Gastrocnemius medialis (tissue), 4 donors: ENCODE measurements at regions of chr2 and their contacts with region 1.

Region 1: GRCh38 chr2:45993476-45993991 is 303.7 kb upstream of the EPAS1 start:
- DNase-seq: peak in 1 of 2 donors; percentile 42
- ATAC-seq: peak; percentile 65 to 66
- H3K4me3 ChIP-seq: no peak overlapping the region
- H3K27ac ChIP-seq: no peak overlapping the region
- H3K4me1 ChIP-seq: peaks cover 8 to 24% of the 10 kb centered on the region in 2 donors
- H3K27me3 ChIP-seq: no peaks in the 10 kb centered on the region
- CTCF ChIP-seq: peak; percentile 61 to 80 (median 66)
- POLR2A ChIP-seq: no peak

Region 2: GRCh38 chr2:45951025-45951727 is 42.4 kb before region 1 on chr2:
- in situ Hi-C with region 1: no loop called
- intact Hi-C with region 1: no loop called
- DNase-seq: no peak
- ATAC-seq: no peak
- H3K4me3 ChIP-seq: no peak overlapping the region
- H3K27ac ChIP-seq: no peak overlapping the region
- H3K4me1 ChIP-seq: peaks cover 0 to 8% of the 10 kb centered on the region in 2 donors
- H3K27me3 ChIP-seq: no peaks in the 10 kb centered on the region
- CTCF ChIP-seq: no peak
- POLR2A ChIP-seq: no peak

Region 3: DNA sequence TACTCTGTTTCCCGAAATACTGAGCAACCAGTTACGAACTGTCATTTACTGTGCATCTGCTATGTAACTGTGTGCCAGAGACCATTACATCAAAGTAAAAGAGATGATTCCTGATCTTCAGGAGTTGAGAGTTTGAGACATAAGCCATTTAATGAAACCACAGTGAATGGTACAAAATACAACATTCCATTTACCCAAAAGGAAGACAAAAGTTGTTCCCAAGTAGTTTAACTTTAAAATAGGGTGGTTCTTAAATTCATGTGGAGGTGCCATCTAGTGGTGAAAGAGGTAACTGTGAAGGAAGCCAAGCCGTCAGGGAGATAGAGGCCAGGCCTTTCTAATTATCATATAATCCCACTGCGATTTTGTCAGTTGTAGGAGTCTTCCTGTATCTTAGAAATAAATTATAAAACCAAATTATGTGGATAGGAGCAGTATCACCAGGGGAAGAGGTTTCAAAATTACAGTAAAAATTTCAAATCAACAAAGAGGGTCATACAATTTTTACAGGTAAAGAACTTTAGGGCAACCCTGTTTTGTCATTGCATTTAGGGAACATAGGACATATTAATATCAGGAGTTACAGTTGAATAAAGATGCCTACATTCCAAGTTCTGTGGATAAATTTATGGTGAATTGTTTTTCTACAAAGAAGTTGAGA is 371.4 kb after region 1 on chr2:
- in situ Hi-C with region 1: loop called in 2 of 4 experiments (anchors 10 kb)
- intact Hi-C with region 1: no loop called
- DNase-seq: no peak
- ATAC-seq: peak; percentile 44 to 71
- H3K4me3 ChIP-seq: no peak overlapping the region
- H3K27ac ChIP-seq: peak overlapping the region in 2 of 4 donors; percentile 12 to 19
- H3K4me1 ChIP-seq: peaks cover 7 to 10% of the 10 kb centered on the region in 2 donors
- H3K27me3 ChIP-seq: no peaks in the 10 kb centered on the region
- CTCF ChIP-seq: peak; percentile 71 to 84 (median 78)
- POLR2A ChIP-seq: no peak

Region 4: GRCh38 chr2:46461011-46461674 is 467.6 kb after region 1 on chr2:
- in situ Hi-C with region 1: no loop called
- intact Hi-C with region 1: loop called (anchors 1 kb)
- DNase-seq: peak; percentile 55 to 63
- ATAC-seq: peak; percentile 56 to 67
- H3K4me3 ChIP-seq: no peak overlapping the region
- H3K27ac ChIP-seq: peak overlapping the region in 1 of 4 donors; percentile 13
- H3K4me1 ChIP-seq: peaks cover 7 to 8% of the 10 kb centered on the region in 2 donors
- H3K27me3 ChIP-seq: no peaks in the 10 kb centered on the region
- CTCF ChIP-seq: peak; percentile 95 to 99 (median 97)
- POLR2A ChIP-seq: no peak

Region 5: DNA sequence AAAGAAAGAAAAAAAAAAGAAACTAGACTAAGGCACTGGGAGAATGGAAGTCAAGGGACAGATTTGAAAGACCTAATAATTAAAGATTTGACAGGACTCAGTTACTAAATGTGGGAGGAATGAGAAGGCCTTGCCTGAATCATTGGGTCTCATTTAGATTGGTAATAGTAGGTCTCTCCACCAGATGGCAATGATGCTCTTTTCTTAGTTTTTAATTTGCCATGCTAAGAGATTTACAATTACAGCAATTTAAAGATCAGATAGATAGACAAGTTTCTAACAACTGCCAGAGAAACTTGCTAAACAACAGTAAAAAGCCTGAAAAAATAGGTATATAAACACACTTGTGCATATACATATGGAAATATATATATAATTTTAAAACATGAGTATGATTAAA is 638.8 kb after region 1 on chr2:
- in situ Hi-C with region 1: loop called (anchors 25 kb)
- intact Hi-C with region 1: no loop called
- DNase-seq: no peak
- ATAC-seq: peak in 1 of 2 donors; percentile 56
- H3K4me3 ChIP-seq: no peak overlapping the region
- H3K27ac ChIP-seq: no peak overlapping the region
- H3K4me1 ChIP-seq: no peaks in the 10 kb centered on the region
- H3K27me3 ChIP-seq: no peaks in the 10 kb centered on the region
- CTCF ChIP-seq: peak in 4 of 5 experiments; percentile 32 to 53 (median 44)
- POLR2A ChIP-seq: no peak

Region 6: DNA sequence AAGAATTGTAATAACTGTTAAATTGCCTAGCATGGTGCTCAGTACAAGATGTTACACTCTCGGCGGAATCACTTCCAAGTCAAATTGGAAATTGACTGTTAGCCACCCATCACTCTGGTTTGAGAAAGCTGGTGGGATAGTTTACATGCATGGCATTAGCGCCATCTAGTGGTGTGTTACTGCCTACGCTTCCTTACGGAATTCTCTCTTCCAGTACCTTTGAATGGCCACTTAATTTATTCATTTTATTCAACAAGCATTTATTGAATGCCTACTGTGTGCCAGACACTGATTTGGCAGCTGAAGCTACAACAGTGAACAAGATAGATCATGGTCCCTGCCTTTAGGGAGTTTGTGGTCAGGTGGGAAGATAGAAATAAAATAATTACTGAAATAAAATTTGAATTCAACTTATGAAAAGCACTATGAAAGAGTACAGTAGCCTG is 657.0 kb after region 1 on chr2:
- in situ Hi-C with region 1: loop called (anchors 25 kb)
- intact Hi-C with region 1: loop called (anchors 5 kb)
- DNase-seq: peak; percentile 30 to 62
- ATAC-seq: peak; percentile 75 to 86
- H3K4me3 ChIP-seq: no peak overlapping the region
- H3K27ac ChIP-seq: no peak overlapping the region
- H3K4me1 ChIP-seq: peaks cover 0 to 4% of the 10 kb centered on the region in 2 donors
- H3K27me3 ChIP-seq: no peaks in the 10 kb centered on the region
- CTCF ChIP-seq: peak; percentile 82 to 98 (median 92)
- POLR2A ChIP-seq: no peak

Region 7: DNA sequence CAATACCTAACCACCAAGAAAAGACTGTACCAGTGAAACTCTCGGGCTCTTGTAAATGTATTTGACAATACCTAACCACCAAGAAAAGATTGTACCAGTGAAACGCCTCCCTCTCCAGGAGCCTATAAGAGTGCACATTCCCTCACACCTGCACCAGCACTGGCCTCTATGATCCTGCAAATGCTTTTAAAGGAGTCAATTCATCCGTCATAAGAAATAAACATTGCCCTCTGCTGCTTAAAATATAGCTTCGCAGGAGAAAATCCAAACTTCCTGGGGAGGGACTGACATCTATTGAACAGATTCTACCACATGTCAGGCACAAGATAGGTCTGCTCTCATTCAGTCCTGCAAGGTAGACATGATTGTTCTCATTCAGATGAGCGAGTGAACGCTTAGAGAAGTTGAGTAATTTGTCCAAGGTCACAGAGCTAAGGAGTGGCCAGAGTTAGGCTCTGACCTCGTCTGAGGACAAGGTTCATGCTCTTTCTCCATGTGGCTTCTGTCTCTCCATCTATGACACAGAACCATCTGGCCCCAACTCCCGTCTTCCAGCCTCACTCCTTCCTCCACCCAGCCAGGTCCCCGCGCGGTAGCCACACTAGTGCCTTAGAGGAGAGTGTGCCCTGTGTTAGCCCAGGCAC is 883.3 kb after region 1 on chr2:
- in situ Hi-C with region 1: no loop called
- intact Hi-C with region 1: loop called (anchors 10 kb)
- DNase-seq: no peak
- ATAC-seq: peak; percentile 64 to 65
- H3K4me3 ChIP-seq: no peak overlapping the region
- H3K27ac ChIP-seq: peak overlapping the region; percentile 11 to 53 (median 34)
- H3K4me1 ChIP-seq: peaks cover 11 to 32% of the 10 kb centered on the region in 2 donors
- H3K27me3 ChIP-seq: no peaks in the 10 kb centered on the region
- CTCF ChIP-seq: peak; percentile 20 to 63 (median 52)
- POLR2A ChIP-seq: no peak